Heart right ventricle (tissue), 16 donors: ENCODE measurements at regions of chr12 and their contacts with region 1.

Region 1: DNA sequence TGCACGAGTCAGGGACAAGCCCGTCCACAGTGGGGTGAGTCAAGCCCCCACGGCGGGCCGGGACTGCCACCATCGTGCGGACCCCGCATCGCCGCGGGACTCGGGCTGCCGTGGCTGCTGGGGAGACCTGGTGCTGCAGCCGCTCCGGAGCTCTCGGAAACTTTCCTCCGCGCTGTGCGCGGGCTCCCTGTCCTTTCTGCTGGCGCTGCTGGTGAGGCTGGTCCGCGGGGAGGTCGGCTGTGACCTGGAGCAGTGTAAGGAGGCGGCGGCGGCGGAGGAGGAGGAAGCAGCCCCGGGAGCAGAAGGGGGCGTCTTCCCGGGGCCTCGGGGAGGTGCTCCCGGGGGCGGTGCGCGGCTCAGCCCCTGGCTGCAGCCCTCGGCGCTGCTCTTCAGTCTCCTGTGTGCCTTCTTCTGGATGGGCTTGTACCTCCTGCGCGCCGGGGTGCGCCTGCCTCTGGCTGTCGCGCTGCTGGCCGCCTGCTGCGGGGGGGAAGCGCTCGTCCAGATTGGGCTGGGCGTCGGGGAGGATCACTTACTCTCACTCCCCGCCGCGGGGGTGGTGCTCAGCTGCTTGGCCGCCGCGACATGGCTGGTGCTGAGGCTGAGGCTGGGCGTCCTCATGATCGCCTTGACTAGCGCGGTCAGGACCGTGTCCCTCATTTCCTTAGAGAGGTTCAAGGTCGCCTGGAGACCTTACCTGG is 1.1 kb downstream of the PDE3A start:
- DNase-seq: peak; percentile 84 to 86
- ATAC-seq: peak; percentile 75 to 90 (median 81)
- H3K4me3 ChIP-seq: peak overlapping the region; percentile 41 to 84 (median 72)
- H3K27ac ChIP-seq: peak overlapping the region; percentile 91 to 97 (median 96)
- H3K4me1 ChIP-seq: peaks cover 0 to 19% (median 13%) of the 10 kb centered on the region in 9 donors
- H3K27me3 ChIP-seq: peaks cover 0 to 59% (median 0%) of the 10 kb centered on the region in 7 donors
- CTCF ChIP-seq: peak in 7 of 9 donors; percentile 6 to 55 (median 33)

Region 2: GRCh38 chr12:19744734-19745218 is 624.7 kb before region 1 on chr12:
- intact Hi-C with region 1: loop called in 2 of 10 experiments (anchors 10 kb)
- DNase-seq: peak in 1 of 2 donors; percentile 43
- ATAC-seq: peak; percentile 73 to 93 (median 88)
- H3K4me3 ChIP-seq: no peak overlapping the region
- H3K27ac ChIP-seq: peak overlapping the region in 7 of 10 donors; percentile 31 to 61 (median 50)
- H3K4me1 ChIP-seq: peaks cover 0 to 38% (median 18%) of the 10 kb centered on the region in 9 donors
- H3K27me3 ChIP-seq: no peaks in the 10 kb centered on the region
- CTCF ChIP-seq: no peak

Region 3: GRCh38 chr12:19915392-19916195 is 453.9 kb before region 1 on chr12:
- intact Hi-C with region 1: loop called in 4 of 10 experiments (anchors 5 to 10 kb)
- DNase-seq: peak in 1 of 2 donors; percentile 26
- ATAC-seq: peak in 7 of 8 donors; percentile 62 to 84 (median 79)
- H3K4me3 ChIP-seq: no peak overlapping the region
- H3K27ac ChIP-seq: peak overlapping the region in 8 of 10 donors; percentile 11 to 67 (median 25)
- H3K4me1 ChIP-seq: peaks cover 0 to 19% (median 7%) of the 10 kb centered on the region in 9 donors
- H3K27me3 ChIP-seq: no peaks in the 10 kb centered on the region
- CTCF ChIP-seq: peak; percentile 36 to 70 (median 62)

Region 4: GRCh38 chr12:20000229-20000869 is 369.1 kb before region 1 on chr12:
- intact Hi-C with region 1: loop called in 2 of 10 experiments (anchors 5 to 10 kb)
- DNase-seq: no peak
- ATAC-seq: peak; percentile 25 to 90 (median 77)
- H3K4me3 ChIP-seq: no peak overlapping the region
- H3K27ac ChIP-seq: peak overlapping the region; percentile 16 to 68 (median 53)
- H3K4me1 ChIP-seq: peaks cover 0 to 16% (median 4%) of the 10 kb centered on the region in 9 donors
- H3K27me3 ChIP-seq: no peaks in the 10 kb centered on the region
- CTCF ChIP-seq: no peak

Region 5: GRCh38 chr12:20154060-20154459 is 215.4 kb before region 1 on chr12:
- intact Hi-C with region 1: no loop called
- DNase-seq: no peak
- ATAC-seq: no peak
- H3K4me3 ChIP-seq: no peak overlapping the region
- H3K27ac ChIP-seq: no peak overlapping the region
- H3K4me1 ChIP-seq: peaks cover 0 to 11% (median 0%) of the 10 kb centered on the region in 9 donors
- H3K27me3 ChIP-seq: no peaks in the 10 kb centered on the region
- CTCF ChIP-seq: no peak

Region 6: DNA sequence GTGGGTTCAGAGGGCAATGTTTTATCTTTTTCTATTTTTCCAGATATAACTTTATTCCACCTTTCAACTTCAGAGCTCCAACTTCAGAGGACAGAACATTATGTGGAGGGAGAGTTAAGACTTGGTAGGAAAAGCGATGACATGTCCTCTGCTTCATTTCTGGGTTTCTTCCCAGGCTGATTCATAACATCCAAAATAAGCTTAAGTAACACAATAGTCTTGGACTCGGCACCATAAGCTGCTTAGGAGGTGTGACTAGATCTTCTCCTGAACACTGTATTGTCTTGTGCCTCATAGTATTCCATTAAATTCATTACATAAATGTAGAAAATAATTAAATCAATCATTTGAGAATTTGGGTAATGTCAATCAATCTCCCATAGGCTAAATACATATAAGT is 96.7 kb before region 1 on chr12:
- intact Hi-C with region 1: loop called in 5 of 10 experiments (anchors 2 to 5 kb)
- DNase-seq: no peak
- ATAC-seq: peak; percentile 59 to 87 (median 79)
- H3K4me3 ChIP-seq: no peak overlapping the region
- H3K27ac ChIP-seq: peak overlapping the region; percentile 45 to 79 (median 67)
- H3K4me1 ChIP-seq: peaks cover 0 to 50% (median 18%) of the 10 kb centered on the region in 9 donors
- H3K27me3 ChIP-seq: no peaks in the 10 kb centered on the region
- CTCF ChIP-seq: no peak

Region 7: DNA sequence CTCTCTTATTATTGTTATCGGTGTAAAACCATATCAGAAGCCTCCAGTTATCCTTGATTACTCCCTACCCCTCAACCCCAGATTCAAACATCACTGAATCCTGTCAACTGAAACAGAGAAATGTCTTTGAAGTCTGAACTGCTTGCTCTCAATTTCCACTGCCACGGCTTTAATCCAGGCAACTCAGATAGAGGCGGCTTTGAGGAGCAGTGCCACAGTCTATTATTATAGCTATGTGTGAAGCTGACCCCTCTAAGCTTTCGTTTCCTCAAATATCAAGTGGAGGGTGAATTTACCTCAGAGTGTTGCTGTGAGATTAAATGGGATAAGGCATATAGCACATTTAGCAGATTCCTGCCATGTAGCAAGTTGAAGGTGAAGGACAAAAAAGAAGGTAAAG is 50.1 kb before region 1 on chr12:
- intact Hi-C with region 1: loop called in 1 of 10 experiments (anchors 5 kb)
- DNase-seq: peak in 1 of 2 donors; percentile 15
- ATAC-seq: peak in 7 of 8 donors; percentile 52 to 84 (median 71)
- H3K4me3 ChIP-seq: peak overlapping the region in 6 of 10 donors; percentile 1 to 19 (median 9)
- H3K27ac ChIP-seq: peak overlapping the region; percentile 6 to 82 (median 74)
- H3K4me1 ChIP-seq: peaks cover 0 to 24% (median 4%) of the 10 kb centered on the region in 9 donors
- H3K27me3 ChIP-seq: no peaks in the 10 kb centered on the region
- CTCF ChIP-seq: no peak

Region 8: DNA sequence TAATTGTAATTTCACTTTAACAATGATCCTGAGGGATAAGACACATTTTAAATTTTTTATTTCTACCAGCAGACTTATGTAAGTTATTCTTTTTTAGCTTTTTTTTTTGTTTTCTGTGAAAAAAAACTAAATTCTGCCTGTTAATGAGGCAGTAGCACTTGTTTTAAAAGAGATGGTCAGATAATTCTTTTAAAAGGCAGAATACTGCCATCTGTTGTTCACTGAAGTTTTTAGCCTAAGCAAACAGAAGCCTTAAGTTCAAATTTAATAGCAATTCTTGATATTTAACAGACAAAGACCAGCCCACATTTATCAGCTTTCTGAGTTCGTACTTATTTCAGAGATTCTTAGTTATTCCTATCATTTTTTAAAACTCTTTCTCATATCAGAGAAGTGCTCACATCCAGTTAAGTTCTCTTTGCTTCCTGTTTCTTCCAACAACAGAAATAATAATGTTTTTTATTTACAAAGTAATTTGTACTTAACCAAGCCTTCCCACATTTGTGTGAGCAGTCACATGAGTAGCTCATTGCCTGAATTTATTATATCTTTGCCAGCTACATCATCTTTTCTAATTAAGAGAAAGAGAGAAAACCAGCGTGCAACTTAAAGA is 232.3 kb after region 1 on chr12:
- intact Hi-C with region 1: loop called in 4 of 10 experiments (anchors 10 kb)
- DNase-seq: no peak
- ATAC-seq: peak in 2 of 8 donors; percentile 32 to 52
- H3K4me3 ChIP-seq: no peak overlapping the region
- H3K27ac ChIP-seq: peak overlapping the region in 8 of 10 donors; percentile 39 to 73 (median 57)
- H3K4me1 ChIP-seq: peaks cover 0 to 59% (median 12%) of the 10 kb centered on the region in 9 donors
- H3K27me3 ChIP-seq: no peaks in the 10 kb centered on the region
- CTCF ChIP-seq: peak in 8 of 9 donors; percentile 13 to 64 (median 52)